ENCODE measurements at regions of chr17 and their contacts with region 1.

Region 1: DNA sequence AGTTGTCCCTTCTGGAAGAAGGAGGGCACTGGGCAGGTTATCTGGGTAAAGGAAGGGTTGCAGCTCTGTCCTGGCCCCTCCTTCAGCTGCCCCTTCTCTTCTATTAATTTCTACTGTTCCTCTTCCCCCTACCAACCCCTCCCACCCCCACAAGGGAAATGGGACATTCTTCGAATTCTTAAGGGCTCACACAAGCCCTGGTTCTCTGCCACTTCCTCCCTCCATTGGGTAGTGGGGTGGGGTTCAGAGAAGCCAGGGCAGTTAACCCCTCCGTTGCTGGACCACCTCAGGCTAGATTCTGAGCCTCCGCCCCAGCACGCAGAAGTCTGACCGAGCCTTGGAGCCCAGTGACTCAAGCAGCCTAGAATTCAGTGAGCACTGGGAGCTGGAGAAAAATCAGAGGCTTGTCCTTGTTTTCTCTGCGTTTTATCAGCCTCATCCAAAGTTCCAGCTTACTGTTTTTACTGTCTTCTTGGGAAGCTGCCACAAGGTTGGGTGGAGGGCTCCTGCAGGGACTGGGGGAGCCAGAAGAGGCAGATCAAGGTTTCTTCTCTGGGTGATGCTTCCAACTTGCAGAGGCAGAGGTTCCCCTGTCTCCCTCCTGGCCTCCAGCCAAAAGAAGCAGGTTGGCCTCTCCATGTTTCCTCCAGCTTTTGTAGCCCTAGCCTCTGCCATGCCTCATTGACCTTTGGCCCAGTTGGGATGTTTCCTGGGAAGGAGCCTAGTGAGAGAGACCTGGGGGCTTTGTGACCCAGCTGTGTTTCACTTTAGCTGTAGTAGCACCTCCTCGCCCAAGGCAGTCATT is 10.2 kb downstream of the LASP1 start:
- DNase-seq: peak; percentile 77
- ATAC-seq: peak; percentile 27 to 58

Region 2: GRCh38 chr17:38900978-38901656 is 21.0 kb after region 1 on chr17:
- intact Hi-C with region 1: loop called in 1 of 2 experiments (anchors 2 kb)
- DNase-seq: peak; percentile 64
- ATAC-seq: peak; percentile 76 to 86